Panc1 (cell line): ENCODE measurements at regions of chr13 and their contacts with region 1.

Region 1: GRCh38 chr13:107977071-107977574 is 238.2 kb downstream of the LIG4 start:
- DNase-seq: no peak
- ATAC-seq: no peak
- H3K4me3 ChIP-seq: no peak overlapping the region
- H3K27ac ChIP-seq: no peak overlapping the region
- H3K4me1 ChIP-seq: no peaks in the 10 kb centered on the region
- H3K27me3 ChIP-seq: no peaks in the 10 kb centered on the region
- CTCF ChIP-seq: no peak

Region 2: DNA sequence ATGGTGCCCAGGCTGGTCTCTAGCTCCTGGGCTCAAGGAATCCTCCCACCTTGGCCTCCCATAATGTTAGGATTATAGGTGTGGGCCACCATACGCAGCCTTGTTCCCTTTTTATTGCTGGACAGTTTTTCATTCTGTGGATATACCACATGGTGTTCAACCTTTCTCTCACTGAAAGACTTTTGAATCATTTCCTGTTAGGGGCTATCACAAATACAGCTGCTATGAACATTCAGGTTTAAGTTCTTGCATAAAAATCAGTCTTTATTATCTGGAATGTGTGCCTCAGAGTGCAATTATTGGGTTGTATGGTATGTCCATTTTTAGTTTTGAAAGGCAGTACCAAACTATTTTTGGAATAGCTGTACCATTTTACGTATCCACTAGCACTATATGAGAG is 408.9 kb before region 1 on chr13:
- CTCF ChIA-PET with region 1: no interaction called
- POLR2A ChIA-PET with region 1: no interaction called
- in situ Hi-C with region 1: no loop called
- intact Hi-C with region 1: no loop called
- DNase-seq: no peak
- ATAC-seq: no peak
- H3K4me3 ChIP-seq: no peak overlapping the region
- H3K27ac ChIP-seq: no peak overlapping the region
- H3K4me1 ChIP-seq: no peaks in the 10 kb centered on the region
- H3K27me3 ChIP-seq: no peaks in the 10 kb centered on the region
- CTCF ChIP-seq: no peak

Region 3: GRCh38 chr13:107941345-107942029 is 35.6 kb before region 1 on chr13:
- CTCF ChIA-PET with region 1: no interaction called
- POLR2A ChIA-PET with region 1: no interaction called
- in situ Hi-C with region 1: no loop called
- intact Hi-C with region 1: loop called (anchors 2 kb)
- DNase-seq: no peak
- ATAC-seq: no peak
- H3K4me3 ChIP-seq: no peak overlapping the region
- H3K27ac ChIP-seq: no peak overlapping the region
- H3K4me1 ChIP-seq: no peaks in the 10 kb centered on the region
- H3K27me3 ChIP-seq: no peaks in the 10 kb centered on the region
- CTCF ChIP-seq: no peak